AG04450 (cell line): ENCODE measurements at regions of chrX and their contacts with region 1.

Region 1: DNA sequence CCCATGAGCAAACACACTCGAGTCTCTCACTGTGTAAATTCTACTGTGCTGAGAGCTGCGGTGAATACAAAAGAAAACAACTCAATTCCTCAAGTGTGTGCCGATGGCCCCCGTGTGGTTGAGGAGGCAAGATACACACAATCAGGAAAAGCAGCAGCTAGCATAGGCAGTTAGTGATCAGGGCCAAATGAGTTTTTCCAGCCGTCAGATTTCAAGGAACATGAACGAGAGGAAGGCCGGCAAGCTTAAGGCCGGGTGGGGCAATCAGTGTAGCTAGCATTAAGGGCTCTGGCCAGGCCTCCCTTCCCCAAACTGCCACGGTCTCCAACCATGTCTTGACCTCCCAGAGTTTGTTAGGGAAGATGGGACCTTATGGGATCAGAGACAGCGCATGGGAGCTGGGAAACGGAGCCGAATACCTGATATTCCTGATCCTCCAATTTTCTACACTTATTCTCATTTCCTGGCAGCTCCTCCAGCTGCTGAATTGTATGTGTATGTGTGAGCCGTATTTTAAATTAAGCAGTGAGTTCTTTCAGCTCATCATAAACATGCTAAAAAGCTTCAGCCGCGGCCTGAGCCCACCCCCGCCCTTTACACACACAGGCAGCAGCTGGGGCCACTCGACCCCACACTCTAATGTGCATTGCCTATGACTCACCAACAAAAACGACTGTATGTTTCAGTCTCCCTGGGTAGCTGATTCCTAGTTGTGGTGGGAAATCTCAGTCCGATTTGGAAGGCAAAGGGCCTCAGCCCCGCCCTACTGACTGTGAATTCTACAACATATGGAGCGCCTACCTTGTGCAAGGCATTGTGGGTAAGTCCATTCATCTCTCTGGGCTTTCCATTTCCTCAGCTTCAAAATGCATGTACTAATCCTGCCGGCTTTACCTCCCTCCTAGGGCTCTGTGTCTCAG is 59.9 kb downstream of the RTL9 start:
- DNase-seq: peak; percentile 66
- H3K4me3 ChIP-seq: peak overlapping the region; percentile 24
- H3K27ac ChIP-seq: peak overlapping the region; percentile 74
- H3K27me3 ChIP-seq: no peaks in the 10 kb centered on the region
- CTCF ChIP-seq: peak; percentile 66

Region 2: GRCh38 chrX:110192516-110192915 is 226.1 kb before region 1 on chrX:
- CTCF ChIA-PET with region 1: no interaction called
- POLR2A ChIA-PET with region 1: no interaction called
- DNase-seq: no peak
- H3K4me3 ChIP-seq: no peak overlapping the region
- H3K27ac ChIP-seq: no peak overlapping the region
- H3K27me3 ChIP-seq: no peaks in the 10 kb centered on the region
- CTCF ChIP-seq: no peak

Region 3: DNA sequence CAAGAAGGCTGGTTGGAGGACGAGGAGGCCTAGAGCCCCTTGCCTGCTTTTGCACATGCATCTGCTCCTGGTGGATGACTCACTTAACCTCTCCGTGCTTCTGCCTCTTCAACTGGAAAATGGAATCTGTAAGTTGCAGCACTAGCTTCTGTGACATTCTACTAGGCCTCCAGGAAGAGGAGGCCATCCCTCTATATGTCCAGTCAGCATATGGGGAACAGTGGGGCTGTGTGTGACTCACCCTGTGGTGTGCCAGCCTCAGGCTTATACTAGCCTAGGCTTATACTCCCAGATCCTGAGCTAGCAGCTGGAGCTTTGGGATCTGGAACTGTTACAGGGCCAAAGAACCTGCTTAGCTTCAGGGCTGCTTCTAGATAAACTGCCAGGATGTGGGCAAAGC is 23.9 kb before region 1 on chrX:
- CTCF ChIA-PET with region 1: interaction called, 10 read pairs
- POLR2A ChIA-PET with region 1: interaction called, 4 read pairs
- DNase-seq: no peak
- H3K4me3 ChIP-seq: no peak overlapping the region
- H3K27ac ChIP-seq: peak overlapping the region; percentile 52
- H3K27me3 ChIP-seq: no peaks in the 10 kb centered on the region
- CTCF ChIP-seq: no peak